ENCODE measurements at regions of chr12 and their contacts with region 1.

Region 1: DNA sequence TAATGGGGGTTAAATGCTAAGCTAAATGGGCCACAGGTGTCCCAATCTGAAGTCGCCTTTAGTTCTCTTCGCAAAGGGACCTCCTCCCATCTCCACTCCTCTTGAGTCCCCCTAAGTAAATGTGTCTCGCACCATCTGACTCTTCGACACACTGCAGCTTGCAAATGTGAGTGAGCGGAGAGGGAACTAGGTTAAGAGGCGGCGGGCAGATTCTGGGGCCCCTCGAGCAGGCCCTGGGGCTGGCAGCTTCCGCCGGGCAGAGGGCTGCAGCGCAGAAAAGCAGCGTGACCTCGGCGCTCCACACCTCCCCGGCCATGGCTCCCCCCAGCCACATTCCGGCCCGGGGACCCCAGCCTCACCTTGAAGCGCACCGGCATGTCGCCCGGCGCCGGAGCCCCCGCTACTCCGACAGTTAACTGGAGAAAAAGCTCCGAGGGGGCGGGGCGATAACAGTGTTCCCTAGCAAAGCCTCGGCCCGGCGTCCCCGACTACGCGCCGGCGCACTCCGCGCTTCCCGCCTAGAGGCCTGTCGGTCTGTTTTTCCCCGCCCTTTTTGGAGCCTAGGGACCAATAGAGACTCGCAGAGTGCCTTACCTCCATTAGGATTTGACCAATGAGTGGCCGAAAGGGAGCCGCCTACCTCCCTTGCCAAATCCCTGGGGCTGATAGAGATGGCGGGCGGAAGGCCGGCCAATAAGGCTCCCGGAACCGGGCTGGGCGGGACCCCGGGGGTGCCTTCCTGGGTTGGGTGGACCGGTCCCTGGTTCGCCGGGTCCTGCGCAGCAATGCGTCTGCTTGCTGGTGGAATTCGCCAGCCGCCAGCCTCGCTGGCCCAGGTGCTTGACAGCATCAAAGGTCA is at the start of gene MDM1:
- DNase-seq: peak; percentile 78
- ATAC-seq: peak; percentile 98
- H3K4me3 ChIP-seq: peak within 1 kb of the TSS; percentile 88 to 94
- H3K27ac ChIP-seq: peak within 1 kb of the TSS; percentile 97
- H3K4me1 ChIP-seq: peaks cover 71% of the 10 kb centered on the region
- H3K27me3 ChIP-seq: no peaks in the 10 kb centered on the region
- CTCF ChIP-seq: no peak
- total RNA-seq, gene MDM1: 17.8 TPM

Region 2: GRCh38 chr12:68056300-68056699 is 275.8 kb before region 1 on chr12:
- CTCF ChIA-PET with region 1: no interaction called
- POLR2A ChIA-PET with region 1: no interaction called
- in situ Hi-C with region 1: no loop called
- intact Hi-C with region 1: no loop called
- DNase-seq: no peak
- ATAC-seq: no peak
- H3K4me3 ChIP-seq: no peak overlapping the region
- H3K27ac ChIP-seq: no peak overlapping the region
- H3K4me1 ChIP-seq: no peaks in the 10 kb centered on the region
- H3K27me3 ChIP-seq: no peaks in the 10 kb centered on the region
- CTCF ChIP-seq: no peak

Region 3: GRCh38 chr12:68565375-68565903 is 233.3 kb after region 1 on chr12:
- CTCF ChIA-PET with region 1: no interaction called
- POLR2A ChIA-PET with region 1: no interaction called
- in situ Hi-C with region 1: no loop called
- intact Hi-C with region 1: loop called (anchors 10 kb)
- DNase-seq: peak; percentile 67
- ATAC-seq: peak; percentile 95
- H3K4me3 ChIP-seq: no peak overlapping the region; a peak in 1 of 4 replicates
- H3K27ac ChIP-seq: peak overlapping the region; percentile 95
- H3K4me1 ChIP-seq: peaks cover 50% of the 10 kb centered on the region
- H3K27me3 ChIP-seq: no peaks in the 10 kb centered on the region
- CTCF ChIP-seq: no peak

Region 4: GRCh38 chr12:68733661-68734071 is 401.6 kb after region 1 on chr12:
- CTCF ChIA-PET with region 1: interaction called, 12 read pairs
- POLR2A ChIA-PET with region 1: no interaction called
- in situ Hi-C with region 1: no loop called
- intact Hi-C with region 1: no loop called
- DNase-seq: peak; percentile 18
- ATAC-seq: no peak
- H3K4me3 ChIP-seq: no peak overlapping the region
- H3K27ac ChIP-seq: no peak overlapping the region
- H3K4me1 ChIP-seq: no peaks in the 10 kb centered on the region
- H3K27me3 ChIP-seq: no peaks in the 10 kb centered on the region
- CTCF ChIP-seq: no peak

Measured in Panc1 (cell line).